ENCODE measurements at regions of chr7 and their contacts with region 1.

Region 1: GRCh38 chr7:134690016-134690415 is 43.4 kb downstream of the BPGM start:
- DNase-seq: no peak
- H3K4me3 ChIP-seq: no peak overlapping the region
- H3K27ac ChIP-seq: no peak overlapping the region
- H3K4me1 ChIP-seq: peaks cover 0 to 3% (median 0%) of the 10 kb centered on the region in 4 experiments; a peak in 1 of 7 replicates
- H3K27me3 ChIP-seq: no peaks in the 10 kb centered on the region
- CTCF ChIP-seq: peak in 1 of 3 experiments; percentile 9; a peak in 1 of 4 replicates
- EP300 ChIP-seq: no peak
- POLR2A ChIP-seq: no peak
- RAD21 ChIP-seq: peak; percentile 42 to 46

Region 2: DNA sequence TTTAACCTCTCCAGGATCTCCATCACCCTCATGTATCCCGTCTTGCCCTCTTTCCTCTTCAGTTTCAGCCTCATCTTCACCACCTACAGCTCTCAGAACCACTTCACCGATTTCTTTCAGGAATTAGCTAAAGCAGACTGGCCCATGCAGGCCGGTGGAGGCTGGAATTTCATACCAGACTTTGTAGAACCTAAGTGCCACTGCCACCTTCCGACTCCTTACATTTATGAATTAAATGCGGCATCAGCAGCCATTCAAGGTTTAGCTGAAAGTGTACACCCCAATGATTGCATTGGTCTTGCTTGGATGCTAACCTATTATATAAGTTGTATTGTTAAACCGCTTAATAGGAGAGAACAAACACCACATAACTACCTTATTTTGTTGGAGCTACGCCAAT is 198.1 kb before region 1 on chr7:
- CTCF ChIA-PET with region 1: no interaction called
- POLR2A ChIA-PET with region 1: no interaction called
- DNase-seq: no peak
- H3K4me3 ChIP-seq: no peak overlapping the region
- H3K27ac ChIP-seq: no peak overlapping the region
- H3K4me1 ChIP-seq: no peaks in the 10 kb centered on the region
- H3K27me3 ChIP-seq: no peaks in the 10 kb centered on the region
- CTCF ChIP-seq: no peak
- EP300 ChIP-seq: no peak
- POLR2A ChIP-seq: no peak
- RAD21 ChIP-seq: no peak

Region 3: GRCh38 chr7:134593530-134594392 is 96.3 kb before region 1 on chr7:
- CTCF ChIA-PET with region 1: no interaction called
- POLR2A ChIA-PET with region 1: no interaction called
- DNase-seq: no peak
- H3K4me3 ChIP-seq: no peak overlapping the region
- H3K27ac ChIP-seq: no peak overlapping the region
- H3K4me1 ChIP-seq: no peaks in the 10 kb centered on the region
- H3K27me3 ChIP-seq: no peaks in the 10 kb centered on the region
- CTCF ChIP-seq: no peak
- EP300 ChIP-seq: no peak
- POLR2A ChIP-seq: no peak
- RAD21 ChIP-seq: no peak

Region 4: GRCh38 chr7:134646425-134647305 is 43.4 kb before region 1 on chr7 and contains the start of gene BPGM:
- CTCF ChIA-PET with region 1: interaction called, 19 read pairs
- POLR2A ChIA-PET with region 1: interaction called, 3 read pairs
- DNase-seq: peak; percentile 94 to 99
- H3K4me3 ChIP-seq: peak within 1 kb of the TSS; percentile 72 to 91 (median 86)
- H3K27ac ChIP-seq: no peak within 1 kb of the TSS
- H3K4me1 ChIP-seq: 0 out of 7 replicates have a peak, but pooled peaks cover 0 to 3% (median under 1%) of the 10 kb centered on the region in 4 experiments
- H3K27me3 ChIP-seq: no peaks in the 10 kb centered on the region
- CTCF ChIP-seq: peak; percentile 31 to 45 (median 34); a peak in 3 of 4 replicates
- EP300 ChIP-seq: no peak
- POLR2A ChIP-seq: peak; percentile 96
- RAD21 ChIP-seq: peak in 1 of 2 experiments; percentile 16; a peak in 1 of 4 replicates
- total RNA-seq, gene BPGM: 15.3 and 17.4 TPM in 2 replicates

Region 5: DNA sequence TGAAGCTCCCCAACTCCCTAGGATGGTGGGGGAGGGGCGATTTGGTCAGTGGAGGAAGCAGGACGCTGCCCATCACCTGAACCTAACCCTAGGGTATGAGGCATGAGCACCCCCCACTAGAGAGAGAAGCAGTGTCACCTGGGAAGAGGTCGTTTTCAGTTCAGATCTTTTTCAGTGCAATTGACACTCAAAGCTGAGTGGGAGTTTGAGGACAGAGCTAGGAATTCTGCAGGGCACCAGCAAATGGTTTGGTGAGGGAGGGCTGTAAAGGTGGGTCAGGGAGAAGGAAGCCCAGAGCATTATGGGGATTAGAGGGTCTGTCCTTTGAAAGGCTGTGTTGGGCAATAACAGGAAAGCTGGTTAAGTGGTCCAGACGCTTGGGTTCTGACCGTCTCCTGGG is 32.5 kb before region 1 on chr7:
- CTCF ChIA-PET with region 1: interaction called, 15 read pairs
- POLR2A ChIA-PET with region 1: no interaction called
- DNase-seq: no peak
- H3K4me3 ChIP-seq: no peak overlapping the region
- H3K27ac ChIP-seq: no peak overlapping the region
- H3K4me1 ChIP-seq: no peaks in the 10 kb centered on the region
- H3K27me3 ChIP-seq: no peaks in the 10 kb centered on the region
- CTCF ChIP-seq: no peak
- EP300 ChIP-seq: no peak
- POLR2A ChIP-seq: no peak
- RAD21 ChIP-seq: no peak

Region 6: GRCh38 chr7:134701272-134701671 is 11.3 kb after region 1 on chr7:
- CTCF ChIA-PET with region 1: interaction called, 28 read pairs
- POLR2A ChIA-PET with region 1: interaction called, 5 read pairs
- DNase-seq: no peak
- H3K4me3 ChIP-seq: no peak overlapping the region
- H3K27ac ChIP-seq: no peak overlapping the region
- H3K4me1 ChIP-seq: peaks cover 0 to 7% (median 4%) of the 10 kb centered on the region in 4 experiments; a peak in 3 of 7 replicates
- H3K27me3 ChIP-seq: no peaks in the 10 kb centered on the region
- CTCF ChIP-seq: peak in 2 of 3 experiments; percentile 61 to 66; a peak in 3 of 4 replicates
- EP300 ChIP-seq: no peak
- POLR2A ChIP-seq: no peak
- RAD21 ChIP-seq: peak; percentile 62 to 71

Region 7: DNA sequence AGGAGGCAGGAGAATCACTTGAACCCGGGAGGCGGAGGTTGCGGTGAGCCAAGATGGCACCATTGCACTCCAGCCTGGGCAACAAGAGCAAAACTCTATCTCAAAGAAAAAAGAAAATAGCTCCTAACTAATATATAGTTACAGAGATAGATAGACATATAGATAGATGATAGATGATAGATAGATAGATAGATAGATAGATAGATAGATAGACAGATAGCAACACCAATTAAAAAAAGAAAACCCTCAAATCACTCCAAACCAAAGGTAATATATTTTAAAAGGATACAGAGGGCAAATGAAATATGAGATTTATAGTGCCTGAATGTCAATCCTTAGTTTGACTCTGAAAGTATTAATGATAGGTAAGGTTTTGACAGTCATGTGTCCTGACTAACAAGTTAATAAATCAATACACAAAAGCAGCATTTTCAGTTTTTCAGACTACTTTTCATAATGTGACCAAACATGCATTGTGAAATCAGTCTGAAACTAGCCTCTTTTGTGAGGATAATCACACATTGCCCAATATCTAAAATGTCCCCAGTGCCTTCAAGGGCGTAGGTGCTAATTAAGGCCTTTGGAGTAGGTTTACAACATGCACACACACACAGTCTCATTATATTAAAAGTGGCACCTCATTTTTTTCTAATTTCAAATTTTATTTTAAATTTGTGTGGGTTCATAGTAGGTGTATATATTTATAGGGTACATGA is 17.8 kb after region 1 on chr7:
- CTCF ChIA-PET with region 1: interaction called, 28 read pairs
- POLR2A ChIA-PET with region 1: interaction called, 5 read pairs
- DNase-seq: no peak
- H3K4me3 ChIP-seq: no peak overlapping the region
- H3K27ac ChIP-seq: no peak overlapping the region
- H3K4me1 ChIP-seq: peaks cover 0 to 5% (median 1%) of the 10 kb centered on the region in 4 experiments; a peak in 3 of 7 replicates
- H3K27me3 ChIP-seq: peaks cover 0 to 1% (median 0%) of the 10 kb centered on the region in 4 experiments; a peak in 1 of 7 replicates
- CTCF ChIP-seq: no peak
- EP300 ChIP-seq: no peak
- POLR2A ChIP-seq: no peak
- RAD21 ChIP-seq: no peak

Region 8: GRCh38 chr7:134750083-134751062 is 60.4 kb after region 1 on chr7:
- CTCF ChIA-PET with region 1: interaction called, 10 read pairs
- POLR2A ChIA-PET with region 1: interaction called, 4 read pairs
- DNase-seq: peak; percentile 50 to 89
- H3K4me3 ChIP-seq: no peak overlapping the region
- H3K27ac ChIP-seq: no peak overlapping the region
- H3K4me1 ChIP-seq: no peaks in the 10 kb centered on the region; a peak in 2 of 7 replicates
- H3K27me3 ChIP-seq: no peaks in the 10 kb centered on the region
- CTCF ChIP-seq: peak; percentile 83 to 97 (median 85)
- EP300 ChIP-seq: no peak
- POLR2A ChIP-seq: no peak
- RAD21 ChIP-seq: peak; percentile 73 to 84

Region 9: DNA sequence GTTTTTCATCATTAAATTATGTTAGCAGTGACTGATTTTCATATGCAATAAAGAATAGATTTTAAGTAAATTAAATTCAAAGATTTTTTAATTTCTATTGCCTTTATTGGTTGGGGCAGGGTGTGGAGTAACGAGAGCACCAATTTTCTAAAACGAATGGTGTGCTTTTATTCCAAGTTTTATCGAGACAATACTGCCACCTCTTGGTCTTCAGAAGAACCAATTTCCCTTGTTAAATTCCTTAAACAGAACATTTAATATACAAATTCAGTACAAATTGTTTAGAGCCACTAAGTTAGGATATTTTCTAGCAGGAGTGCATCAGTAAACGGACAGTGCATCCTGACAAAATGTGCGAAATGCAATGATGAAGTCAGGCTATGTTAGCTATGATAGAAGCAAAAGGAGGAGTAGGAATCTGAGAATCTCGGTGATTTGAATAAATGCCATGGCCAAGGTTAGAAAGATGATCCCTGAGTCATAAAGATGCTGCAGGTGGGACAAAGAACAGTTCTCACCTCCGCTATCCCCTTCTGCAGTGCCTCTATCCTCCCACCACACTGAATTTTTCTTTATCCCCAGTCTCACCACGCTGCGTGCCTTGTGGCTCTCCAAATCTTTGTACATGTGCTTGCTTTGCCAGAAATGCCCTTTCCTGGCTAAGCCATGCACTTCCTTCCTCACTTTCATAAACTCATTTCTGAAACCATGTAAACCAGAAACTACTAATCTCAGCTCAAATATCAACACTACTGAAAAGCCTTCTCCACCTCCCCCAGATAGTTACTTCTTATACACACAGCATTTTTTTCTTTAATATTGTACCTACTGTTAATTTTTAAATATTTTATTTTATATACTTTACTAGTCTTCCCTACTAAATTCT is 264.4 kb after region 1 on chr7:
- CTCF ChIA-PET with region 1: interaction called, 10 read pairs
- POLR2A ChIA-PET with region 1: no interaction called
- DNase-seq: no peak
- H3K4me3 ChIP-seq: no peak overlapping the region
- H3K27ac ChIP-seq: no peak overlapping the region
- H3K4me1 ChIP-seq: no peaks in the 10 kb centered on the region
- H3K27me3 ChIP-seq: peaks cover 0 to 1% (median 0%) of the 10 kb centered on the region in 4 experiments; a peak in 1 of 7 replicates
- CTCF ChIP-seq: peak in 2 of 3 experiments; percentile 33 to 49; a peak in 2 of 4 replicates
- EP300 ChIP-seq: no peak
- POLR2A ChIP-seq: no peak
- RAD21 ChIP-seq: peak; percentile 69 to 74

Measured in H1 (cell line).